Ovary (tissue), 10 donors: ENCODE measurements at regions of chr2 and their contacts with region 1.

Region 1: DNA sequence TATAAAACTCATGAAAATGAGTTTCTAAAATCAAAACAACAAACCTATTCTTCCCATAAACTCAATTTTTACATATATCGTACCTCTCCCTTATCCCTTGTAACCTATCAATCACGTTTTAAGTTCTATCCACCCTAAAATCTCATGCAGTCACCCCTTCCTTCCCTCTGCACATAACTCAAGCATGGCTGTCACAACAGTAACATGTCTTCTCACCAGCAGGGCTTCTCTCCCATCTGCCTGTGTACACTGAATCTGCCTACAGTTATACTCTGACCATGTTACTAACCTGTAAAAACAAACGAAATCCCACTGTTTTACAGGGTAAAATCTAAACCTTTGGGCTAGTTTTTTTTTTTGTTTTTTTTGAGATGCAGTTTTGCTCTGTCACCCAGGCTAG is 68.2 kb downstream of the MAP4K3 start:
- DNase-seq: no peak
- H3K4me3 ChIP-seq: no peak overlapping the region
- H3K27ac ChIP-seq: no peak overlapping the region
- H3K4me1 ChIP-seq: no peaks in the 10 kb centered on the region
- H3K27me3 ChIP-seq: no peaks in the 10 kb centered on the region
- CTCF ChIP-seq: no peak
- EP300 ChIP-seq: no peak
- POLR2A ChIP-seq: no peak

Region 2: GRCh38 chr2:38293152-38293865 is 1075.5 kb before region 1 on chr2:
- intact Hi-C with region 1: loop called in 1 of 4 experiments (anchors 5 kb)
- DNase-seq: no peak
- H3K4me3 ChIP-seq: no peak overlapping the region
- H3K27ac ChIP-seq: no peak overlapping the region
- H3K4me1 ChIP-seq: no peaks in the 10 kb centered on the region
- H3K27me3 ChIP-seq: no peaks in the 10 kb centered on the region
- CTCF ChIP-seq: no peak
- EP300 ChIP-seq: no peak
- POLR2A ChIP-seq: no peak

Region 3: DNA sequence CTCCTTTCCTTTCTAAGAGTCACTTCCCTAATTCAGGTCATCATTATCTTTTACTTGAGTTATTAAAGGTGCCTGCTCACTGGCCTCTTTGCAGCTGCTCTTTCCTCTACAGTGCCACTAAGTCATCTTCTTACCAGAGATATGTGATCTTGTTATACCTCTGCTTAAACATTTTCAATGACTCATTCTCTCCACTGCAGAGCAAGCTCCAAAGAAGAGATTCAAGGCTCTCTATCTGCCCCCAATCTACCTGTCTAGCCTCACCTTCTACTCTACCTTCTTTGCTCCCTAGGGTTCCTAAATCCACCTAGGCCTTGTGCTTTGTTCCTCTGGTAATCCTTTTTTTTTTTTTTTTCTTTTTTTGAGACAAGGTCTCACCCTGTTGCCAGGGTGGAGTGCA is 476.0 kb before region 1 on chr2:
- intact Hi-C with region 1: no loop called
- DNase-seq: no peak
- H3K4me3 ChIP-seq: no peak overlapping the region
- H3K27ac ChIP-seq: no peak overlapping the region
- H3K4me1 ChIP-seq: no peaks in the 10 kb centered on the region
- H3K27me3 ChIP-seq: no peaks in the 10 kb centered on the region
- CTCF ChIP-seq: no peak
- EP300 ChIP-seq: no peak
- POLR2A ChIP-seq: no peak

Region 4: GRCh38 chr2:39431592-39432316 is 62.9 kb after region 1 on chr2:
- intact Hi-C with region 1: no loop called
- DNase-seq: no peak
- H3K4me3 ChIP-seq: no peak overlapping the region
- H3K27ac ChIP-seq: no peak overlapping the region
- H3K4me1 ChIP-seq: peaks cover 6% of the 10 kb centered on the region
- H3K27me3 ChIP-seq: no peaks in the 10 kb centered on the region
- CTCF ChIP-seq: no peak
- EP300 ChIP-seq: no peak
- POLR2A ChIP-seq: no peak